Activated CD4-positive, alpha-beta T cell treated with anti-CD3 and anti-CD28 coated beads, Interleukin-2, amount 10 ng/mL, durations not matched to agents 24 days and 14 days (primary cell): ENCODE measurements at regions of chr2 and their contacts with region 1.

Region 1: DNA sequence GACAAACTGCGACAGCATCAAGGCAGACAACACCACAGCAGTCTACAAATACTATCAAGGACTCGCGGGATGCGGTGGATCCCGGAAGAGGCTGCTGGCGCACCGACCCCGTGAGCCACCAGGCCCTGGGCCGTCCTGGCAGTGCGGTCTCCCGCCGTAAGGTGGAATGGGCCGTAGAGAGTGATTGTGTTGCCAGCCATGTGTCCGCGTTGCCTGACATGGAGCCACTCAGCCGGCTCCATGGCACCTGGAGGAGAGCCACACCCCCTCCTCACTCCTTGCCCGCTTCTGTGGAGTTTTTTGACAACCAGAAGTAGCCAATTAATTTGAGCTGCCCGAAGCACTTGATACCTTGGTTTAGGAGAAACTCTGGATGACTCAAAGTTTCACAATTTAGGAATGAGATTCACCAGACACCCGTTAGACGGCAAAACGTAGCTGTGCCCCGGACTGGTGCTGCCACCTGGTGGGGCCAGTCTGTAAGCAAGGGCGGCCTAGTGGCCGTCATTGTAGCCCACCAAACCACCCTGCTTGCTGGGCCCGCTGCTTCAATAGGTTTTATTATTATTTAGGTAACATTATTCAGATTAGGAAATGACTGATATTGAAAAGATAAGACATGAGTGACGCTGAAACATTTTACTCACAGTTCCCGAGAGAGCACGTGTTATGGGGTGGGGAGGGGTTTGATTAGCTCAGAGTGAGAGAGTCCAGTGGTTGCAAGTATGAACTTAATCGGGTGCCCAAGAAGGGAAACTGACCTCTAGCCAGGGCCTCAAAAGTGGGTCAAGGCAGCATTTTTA is 10.2 kb upstream of the IMP4 start:
- DNase-seq: peak; percentile 91
- H3K4me3 Mint-ChIP-seq: peak overlapping the region; percentile 52
- H3K27ac Mint-ChIP-seq: no peak overlapping the region
- H3K4me1 Mint-ChIP-seq: peaks cover 5% of the 10 kb centered on the region
- H3K27me3 Mint-ChIP-seq: peaks cover 33% of the 10 kb centered on the region

Region 2: GRCh38 chr2:129936334-129936934 is 396.0 kb before region 1 on chr2:
- intact Hi-C with region 1: loop called (anchors 1 kb)
- DNase-seq: peak; percentile 91
- H3K4me3 Mint-ChIP-seq: no peak overlapping the region
- H3K27ac Mint-ChIP-seq: no peak overlapping the region
- H3K4me1 Mint-ChIP-seq: no peaks in the 10 kb centered on the region
- H3K27me3 Mint-ChIP-seq: peaks cover 28% of the 10 kb centered on the region

Region 3: DNA sequence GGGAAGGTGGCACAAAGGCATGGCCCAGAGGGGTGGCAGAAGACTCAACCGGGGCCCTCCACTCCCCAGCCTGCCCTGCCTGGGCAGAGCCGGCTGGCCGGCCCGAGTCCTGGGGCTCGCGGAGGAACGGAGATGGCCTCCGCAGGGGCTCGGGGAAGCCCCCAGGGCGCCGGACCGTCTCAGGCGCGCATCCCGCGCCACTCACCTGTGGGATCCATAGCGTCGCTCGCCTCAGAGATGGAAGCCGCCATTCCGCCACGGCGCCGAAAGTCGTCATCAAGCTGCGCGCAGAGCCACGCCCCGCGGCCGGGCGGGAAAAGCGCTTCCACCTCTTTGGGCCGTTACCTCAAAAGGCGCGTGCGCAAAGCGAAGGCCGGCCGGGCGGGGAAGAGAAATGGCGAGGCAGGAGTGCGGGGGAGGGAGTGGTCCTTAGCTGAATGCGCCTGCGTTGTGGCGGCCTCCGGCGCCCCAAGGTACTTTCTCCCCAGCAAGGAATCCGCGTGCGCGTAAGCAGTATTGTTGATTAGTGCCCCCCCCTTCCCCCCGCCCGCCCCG is 151.1 kb before region 1 on chr2 and contains the start of gene SMPD4:
- intact Hi-C with region 1: loop called (anchors 2 kb)
- DNase-seq: peak; percentile 99
- H3K4me3 Mint-ChIP-seq: peak within 1 kb of the TSS; percentile 93
- H3K27ac Mint-ChIP-seq: peak within 1 kb of the TSS; percentile 96
- H3K4me1 Mint-ChIP-seq: peaks cover 7% of the 10 kb centered on the region
- H3K27me3 Mint-ChIP-seq: no peaks in the 10 kb centered on the region
- total RNA-seq, gene SMPD4: 86.0 and 91.1 TPM in 2 replicates

Region 4: GRCh38 chr2:130342533-130343275 is 10.2 kb after region 1 on chr2 and contains the start of gene IMP4:
- intact Hi-C with region 1: no loop called
- DNase-seq: peak; percentile 99
- H3K4me3 Mint-ChIP-seq: peak within 1 kb of the TSS; percentile 97
- H3K27ac Mint-ChIP-seq: peak within 1 kb of the TSS; percentile 97
- H3K4me1 Mint-ChIP-seq: peaks cover 24% of the 10 kb centered on the region
- H3K27me3 Mint-ChIP-seq: no peaks in the 10 kb centered on the region
- total RNA-seq, gene IMP4: 177 and 178 TPM in 2 replicates

Region 5: GRCh38 chr2:130376433-130377293 is 44.2 kb after region 1 on chr2:
- intact Hi-C with region 1: no loop called
- DNase-seq: peak; percentile 66
- H3K4me3 Mint-ChIP-seq: peak overlapping the region; percentile 51
- H3K27ac Mint-ChIP-seq: peak overlapping the region; percentile 42
- H3K4me1 Mint-ChIP-seq: peaks cover 63% of the 10 kb centered on the region
- H3K27me3 Mint-ChIP-seq: no peaks in the 10 kb centered on the region